ENCODE measurements at regions of chr9 and their contacts with region 1.

Region 1: GRCh38 chr9:68690088-68690487 is 15.0 kb upstream of the PIP5K1B start:
- DNase-seq: peak; percentile 81

Region 2: GRCh38 chr9:68941780-68942459 is 251.8 kb after region 1 on chr9:
- intact Hi-C with region 1: loop called (anchors 5 kb)
- DNase-seq: no peak